Sciatic nerve (tissue), 2 donors: ENCODE measurements at regions of chr18 and their contacts with region 1.

Region 1: DNA sequence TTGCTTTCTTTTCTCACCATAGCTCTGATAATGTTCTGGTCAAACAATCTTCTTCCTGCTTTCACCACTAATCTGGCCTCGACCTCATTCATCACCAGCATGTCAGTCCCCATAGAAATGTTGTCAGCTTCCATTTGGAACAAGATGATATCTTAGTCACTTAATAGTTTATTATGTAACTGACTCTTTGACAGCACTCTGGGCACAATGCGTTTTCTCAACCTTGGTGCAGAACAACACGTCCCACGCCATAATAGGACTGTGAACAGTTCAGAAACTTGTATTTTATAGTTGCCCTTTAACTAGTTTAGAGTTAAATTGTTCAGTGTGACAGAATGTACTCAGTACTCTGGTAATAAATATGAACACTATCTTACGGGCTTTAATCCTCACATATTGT is 106.0 kb downstream of the MC4R start:
- DNase-seq: no peak
- ATAC-seq: no peak

Region 2: DNA sequence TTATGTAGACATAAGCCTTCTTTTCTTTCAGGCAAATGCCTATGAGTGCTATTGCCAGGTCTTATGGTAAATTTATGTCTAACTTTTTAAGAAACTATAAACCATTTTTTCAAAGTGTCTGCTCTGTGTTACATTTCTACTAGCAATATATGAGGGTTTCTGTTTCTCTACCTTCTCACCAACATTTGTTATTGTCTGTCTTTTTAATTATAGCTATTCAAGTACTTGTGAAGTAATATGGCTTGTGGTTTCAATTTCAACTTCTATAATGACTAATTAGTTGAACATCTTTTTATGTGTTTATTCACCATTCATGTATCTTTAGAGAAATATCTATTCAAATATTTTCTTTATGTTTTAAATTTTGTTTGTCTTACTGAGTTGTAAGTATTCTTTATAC is 319.1 kb after region 1 on chr18:
- intact Hi-C with region 1: loop called (anchors 2 kb)
- DNase-seq: no peak
- ATAC-seq: no peak